Activated CD4-positive, alpha-beta T cell treated with anti-CD3 and anti-CD28 coated beads for 36 hours (primary cell): ENCODE measurements at regions of chr10 and their contacts with region 1.

Region 1: GRCh38 chr10:50540069-50540825 is 83.5 kb downstream of the SGMS1 start:
- DNase-seq: peak; percentile 75
- ATAC-seq: peak; percentile 63
- H3K4me3 Mint-ChIP-seq: peak overlapping the region; percentile 35
- H3K27ac Mint-ChIP-seq: peak overlapping the region; percentile 80
- H3K4me1 Mint-ChIP-seq: peaks cover 93% of the 10 kb centered on the region
- H3K27me3 Mint-ChIP-seq: no peaks in the 10 kb centered on the region

Region 2: GRCh38 chr10:50396491-50397311 is 143.5 kb before region 1 on chr10:
- CTCF ChIA-PET with region 1: no interaction called
- POLR2A ChIA-PET with region 1: interaction called, 3 read pairs
- intact Hi-C with region 1: loop called in 1 of 2 experiments (anchors 1 kb)
- DNase-seq: peak; percentile 43
- ATAC-seq: peak; percentile 91
- H3K4me3 Mint-ChIP-seq: peak overlapping the region; percentile 49
- H3K27ac Mint-ChIP-seq: peak overlapping the region; percentile 16
- H3K4me1 Mint-ChIP-seq: peaks cover 44% of the 10 kb centered on the region
- H3K27me3 Mint-ChIP-seq: no peaks in the 10 kb centered on the region

Region 3: DNA sequence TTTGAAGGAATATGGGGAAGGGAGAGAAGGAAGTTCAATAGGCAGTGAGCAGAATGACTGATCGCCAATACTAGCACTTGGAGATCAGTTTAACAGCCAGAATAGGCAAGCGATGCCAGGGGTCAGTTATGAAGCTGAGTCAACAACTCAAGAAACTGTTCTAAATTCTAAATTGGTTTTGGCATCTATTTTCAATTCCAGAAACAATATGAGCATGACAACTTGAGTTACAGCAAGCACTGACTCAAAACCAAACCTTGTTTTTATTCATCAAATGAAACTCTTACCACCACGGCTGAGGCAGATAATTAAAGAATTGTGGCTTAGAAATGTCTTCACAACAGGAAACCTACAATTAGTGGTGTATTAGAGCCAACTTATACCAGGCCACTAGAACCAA is 108.5 kb before region 1 on chr10:
- CTCF ChIA-PET with region 1: no interaction called
- POLR2A ChIA-PET with region 1: interaction called, 4 read pairs
- intact Hi-C with region 1: loop called (anchors 1 kb)
- DNase-seq: peak; percentile 42
- ATAC-seq: peak; percentile 69
- H3K4me3 Mint-ChIP-seq: no peak overlapping the region
- H3K27ac Mint-ChIP-seq: peak overlapping the region; percentile 49
- H3K4me1 Mint-ChIP-seq: peaks cover 30% of the 10 kb centered on the region
- H3K27me3 Mint-ChIP-seq: no peaks in the 10 kb centered on the region

Region 4: DNA sequence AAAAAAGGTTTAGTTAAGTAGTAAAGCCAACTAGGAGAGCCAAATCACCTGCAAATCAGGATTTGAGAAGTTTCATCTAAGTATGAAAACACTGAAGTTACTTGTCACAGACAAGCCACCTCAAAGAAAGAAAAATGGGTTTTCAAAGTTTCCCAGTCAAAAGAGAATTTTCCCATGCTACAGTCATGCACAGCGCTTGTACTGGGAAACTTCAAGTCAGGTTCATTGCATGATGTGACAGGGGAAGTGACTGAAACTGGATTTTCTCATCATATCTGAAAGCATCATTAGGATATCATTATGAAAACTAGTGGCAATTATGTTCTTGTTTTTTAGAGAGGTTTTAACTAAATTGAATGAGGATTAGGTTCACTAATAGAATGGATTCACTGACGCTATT is 83.5 kb before region 1 on chr10:
- CTCF ChIA-PET with region 1: no interaction called
- POLR2A ChIA-PET with region 1: no interaction called
- intact Hi-C with region 1: no loop called
- DNase-seq: no peak
- ATAC-seq: no peak
- H3K4me3 Mint-ChIP-seq: no peak overlapping the region
- H3K27ac Mint-ChIP-seq: no peak overlapping the region
- H3K4me1 Mint-ChIP-seq: peaks cover 13% of the 10 kb centered on the region
- H3K27me3 Mint-ChIP-seq: no peaks in the 10 kb centered on the region

Region 5: GRCh38 chr10:50508315-50509051 is 31.8 kb before region 1 on chr10:
- CTCF ChIA-PET with region 1: interaction called, 8 read pairs
- POLR2A ChIA-PET with region 1: interaction called, 16 read pairs
- intact Hi-C with region 1: loop called (anchors 1 kb)
- DNase-seq: peak; percentile 61
- ATAC-seq: peak; percentile 56
- H3K4me3 Mint-ChIP-seq: no peak overlapping the region
- H3K27ac Mint-ChIP-seq: no peak overlapping the region
- H3K4me1 Mint-ChIP-seq: peaks cover 68% of the 10 kb centered on the region
- H3K27me3 Mint-ChIP-seq: peaks cover 3% of the 10 kb centered on the region

Region 6: GRCh38 chr10:50527442-50528043 is 12.7 kb before region 1 on chr10:
- CTCF ChIA-PET with region 1: no interaction called
- POLR2A ChIA-PET with region 1: no interaction called
- intact Hi-C with region 1: loop called in 1 of 2 experiments (anchors 1 kb)
- DNase-seq: no peak
- ATAC-seq: peak; percentile 88
- H3K4me3 Mint-ChIP-seq: no peak overlapping the region
- H3K27ac Mint-ChIP-seq: no peak overlapping the region
- H3K4me1 Mint-ChIP-seq: peaks cover 35% of the 10 kb centered on the region
- H3K27me3 Mint-ChIP-seq: no peaks in the 10 kb centered on the region

Region 7: DNA sequence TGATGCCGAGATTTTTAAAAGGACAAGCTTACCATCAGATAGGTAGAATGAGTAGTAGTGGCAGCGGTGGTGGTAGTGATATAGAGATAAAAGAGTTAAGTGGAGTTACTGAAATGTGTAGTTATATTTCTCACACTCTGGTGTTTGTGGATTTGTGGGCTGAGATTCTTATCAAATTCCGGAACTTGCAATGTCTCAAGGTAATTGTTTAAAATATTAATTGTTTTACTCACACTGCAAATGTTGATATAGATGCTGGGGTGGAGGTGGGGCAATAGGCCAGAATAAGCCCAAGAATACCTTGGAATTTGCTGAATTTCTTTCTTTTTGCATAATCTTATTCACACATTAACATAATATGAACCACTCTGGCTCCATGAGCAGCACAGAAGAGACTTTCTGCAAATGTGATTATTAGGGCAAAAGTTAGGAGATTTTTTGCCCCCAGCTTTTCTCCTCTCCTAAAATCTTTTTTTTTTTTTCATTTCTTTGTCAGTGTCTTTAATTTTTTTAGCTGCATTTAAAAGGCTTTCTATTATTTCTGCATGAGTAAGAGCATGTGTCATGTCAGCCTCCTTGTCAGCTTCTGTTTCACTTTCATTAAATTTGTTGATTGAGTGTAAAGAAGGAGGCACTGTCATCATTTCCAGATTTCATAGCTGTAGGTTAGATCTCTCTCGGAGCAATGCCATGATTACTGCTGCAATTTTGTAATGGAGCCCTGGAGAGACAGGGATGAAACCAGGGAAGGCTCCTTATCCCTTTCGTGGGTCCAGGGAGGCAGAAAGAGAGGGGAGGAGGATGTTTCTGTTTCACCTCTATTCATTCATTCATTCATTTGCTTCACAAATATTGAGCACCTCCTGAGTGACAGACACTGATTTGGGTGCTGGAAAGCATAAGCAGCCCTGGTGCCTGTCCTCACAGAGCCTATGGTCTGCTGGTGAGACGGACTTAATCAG is 96.7 kb after region 1 on chr10:
- CTCF ChIA-PET with region 1: interaction called, 4 read pairs
- POLR2A ChIA-PET with region 1: interaction called, 8 read pairs
- intact Hi-C with region 1: loop called (anchors 1 to 2 kb)
- DNase-seq: peak; percentile 47
- ATAC-seq: peak; percentile 95
- H3K4me3 Mint-ChIP-seq: peak overlapping the region; percentile 9
- H3K27ac Mint-ChIP-seq: peak overlapping the region; percentile 24
- H3K4me1 Mint-ChIP-seq: peaks cover 28% of the 10 kb centered on the region
- H3K27me3 Mint-ChIP-seq: peaks cover 24% of the 10 kb centered on the region

Region 8: DNA sequence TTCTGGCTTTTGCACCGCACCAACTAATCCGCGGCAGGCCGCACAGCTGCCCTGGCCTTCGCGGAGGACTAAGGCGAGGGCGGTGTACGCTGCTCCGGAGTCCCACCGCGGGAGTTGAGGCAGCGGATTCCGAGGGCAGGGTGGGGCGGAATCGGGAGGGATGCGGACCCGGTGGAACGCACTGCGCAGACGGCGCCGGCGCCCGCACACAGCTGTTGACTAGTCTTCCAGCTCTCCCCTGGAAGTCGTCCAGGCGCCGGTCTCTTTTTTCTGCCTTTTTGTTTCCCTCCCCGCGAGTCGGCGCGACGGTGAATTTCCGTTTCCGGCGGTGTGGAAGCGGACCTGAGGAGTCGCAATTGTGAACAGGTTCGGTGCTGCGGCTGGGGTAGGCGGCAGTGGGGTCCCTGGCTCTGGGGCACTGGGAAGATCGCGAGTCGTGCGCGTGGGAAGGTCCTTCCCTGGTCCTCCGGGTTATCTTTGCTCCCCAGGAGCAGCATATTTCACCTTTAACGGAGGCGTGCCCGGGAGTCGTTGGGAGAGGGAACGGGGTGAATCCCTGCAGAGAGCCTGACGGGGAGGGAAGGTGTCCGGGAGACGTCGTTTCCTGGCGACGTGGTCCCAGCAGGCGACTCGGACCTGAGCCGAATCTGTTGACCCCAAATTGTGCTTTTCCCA is 199.5 kb after region 1 on chr10 and contains the start of gene ASAH2B:
- CTCF ChIA-PET with region 1: no interaction called
- POLR2A ChIA-PET with region 1: no interaction called
- intact Hi-C with region 1: loop called in 1 of 2 experiments (anchors 10 kb)
- DNase-seq: peak; percentile 88
- ATAC-seq: peak; percentile 87
- H3K4me3 Mint-ChIP-seq: peak within 1 kb of the TSS; percentile 99
- H3K27ac Mint-ChIP-seq: peak within 1 kb of the TSS; percentile 97
- H3K4me1 Mint-ChIP-seq: peaks cover 15% of the 10 kb centered on the region
- H3K27me3 Mint-ChIP-seq: peaks cover 1% of the 10 kb centered on the region
- total RNA-seq, gene ASAH2B: 5.9 to 10.3 TPM